IMR-90 (cell line): ENCODE measurements at regions of chr14 and their contacts with region 1.

Region 1: GRCh38 chr14:77320238-77320935 is at the start of gene POMT2:
- DNase-seq: peak; percentile 79
- ATAC-seq: peak; percentile 64
- H3K4me3 ChIP-seq: peak within 1 kb of the TSS; percentile 84
- H3K27ac ChIP-seq: peak within 1 kb of the TSS; percentile 98
- H3K4me1 ChIP-seq: peaks cover 2% of the 10 kb centered on the region; the same call in 1 of the 2 replicates
- H3K27me3 ChIP-seq: no peaks in the 10 kb centered on the region
- CTCF ChIP-seq: peak; percentile 57
- POLR2A ChIP-seq: no peak
- RAD21 ChIP-seq: 0 out of 2 replicates have a peak, but pooled peaks have one; percentile 9
- total RNA-seq, gene POMT2: 5.8 and 6.5 TPM in 2 replicates

Region 2: DNA sequence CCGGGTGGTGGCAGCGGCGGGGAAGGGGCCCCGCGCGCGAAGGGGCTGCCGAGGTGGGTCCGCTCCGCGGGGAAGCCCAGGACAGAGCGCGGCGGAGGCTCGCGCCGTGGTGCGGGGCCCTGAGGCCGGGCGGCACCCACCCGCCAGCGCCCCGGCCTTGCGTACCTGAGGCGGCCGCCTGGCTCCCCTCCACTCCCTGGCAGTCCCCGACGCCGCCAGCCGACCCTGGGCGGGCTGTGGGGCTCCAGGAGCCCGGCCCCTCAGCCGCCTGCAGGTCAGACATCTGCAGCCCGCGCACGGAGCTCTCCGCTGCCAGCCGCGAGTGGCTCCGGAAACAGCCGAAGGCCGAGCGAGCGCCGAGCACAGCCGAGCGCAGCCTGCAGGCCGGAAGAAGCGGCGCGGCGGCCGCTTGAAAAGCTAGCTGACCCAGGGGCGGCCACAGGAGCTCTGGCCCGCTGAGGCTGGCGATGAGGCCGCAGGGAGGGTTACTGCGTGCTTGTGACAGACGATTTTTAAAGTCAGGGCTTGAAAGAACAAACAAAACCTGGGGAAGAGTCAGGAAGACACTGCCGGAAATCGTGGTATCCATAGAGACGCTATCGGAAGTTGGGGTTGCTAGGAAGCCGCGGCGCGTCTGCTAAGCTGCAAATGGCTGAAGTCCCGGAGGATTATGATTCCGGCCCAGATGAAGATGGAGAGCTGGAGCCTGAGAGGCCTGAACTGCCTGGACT is 56.5 kb after region 1 on chr14 and contains the starts of genes SAMD15 and TMED8:
- CTCF ChIA-PET with region 1: interaction called, 3 read pairs
- POLR2A ChIA-PET with region 1: no interaction called
- dilution Hi-C with region 1: no loop called
- in situ Hi-C with region 1: no loop called
- intact Hi-C with region 1: loop called (anchors 2 kb)
- DNase-seq: peak; percentile 80
- ATAC-seq: peak; percentile 98
- H3K4me3 ChIP-seq: peak within 1 kb of the TSS; percentile 86
- H3K27ac ChIP-seq: peak within 1 kb of the TSS; percentile 93
- H3K4me1 ChIP-seq: no peaks in the 10 kb centered on the region
- H3K27me3 ChIP-seq: peaks cover 7% of the 10 kb centered on the region
- CTCF ChIP-seq: peak; percentile 24; the same call in 1 of the 2 replicates
- POLR2A ChIP-seq: no peak
- RAD21 ChIP-seq: no peak
- total RNA-seq, gene SAMD15: 1.3 and 1.7 TPM in 2 replicates
- total RNA-seq, gene TMED8: 5.0 and 6.9 TPM in 2 replicates

Region 3: GRCh38 chr14:77526266-77526665 is 205.9 kb after region 1 on chr14:
- CTCF ChIA-PET with region 1: no interaction called
- POLR2A ChIA-PET with region 1: no interaction called
- dilution Hi-C with region 1: no loop called
- in situ Hi-C with region 1: no loop called
- intact Hi-C with region 1: no loop called
- DNase-seq: no peak
- ATAC-seq: no peak
- H3K4me3 ChIP-seq: no peak overlapping the region
- H3K27ac ChIP-seq: no peak overlapping the region; the same call in 1 of the 2 replicates
- H3K4me1 ChIP-seq: peaks cover 4% of the 10 kb centered on the region; the same call in 1 of the 2 replicates
- H3K27me3 ChIP-seq: no peaks in the 10 kb centered on the region
- CTCF ChIP-seq: no peak
- POLR2A ChIP-seq: no peak
- RAD21 ChIP-seq: no peak

Region 4: DNA sequence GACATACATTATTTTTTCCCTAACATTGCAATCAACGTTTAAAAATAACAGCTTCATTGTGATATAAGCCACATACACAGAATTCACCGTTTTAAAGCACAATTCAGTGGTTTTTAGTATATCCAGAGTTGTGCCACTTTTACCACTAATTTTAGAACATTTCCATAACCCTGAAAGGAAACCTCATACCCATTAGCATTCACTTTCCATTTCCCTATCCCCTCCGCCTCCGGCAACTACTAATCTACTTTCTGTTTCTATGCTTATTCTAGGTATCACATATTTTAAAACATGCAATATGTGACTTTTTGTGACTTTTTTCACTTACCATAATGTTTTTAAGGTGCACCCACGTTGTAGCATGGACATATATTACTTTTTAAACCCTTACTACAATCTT is 233.8 kb after region 1 on chr14:
- CTCF ChIA-PET with region 1: no interaction called
- POLR2A ChIA-PET with region 1: no interaction called
- dilution Hi-C with region 1: no loop called
- in situ Hi-C with region 1: no loop called
- intact Hi-C with region 1: loop called (anchors 5 kb)
- DNase-seq: no peak
- ATAC-seq: no peak
- H3K4me3 ChIP-seq: no peak overlapping the region
- H3K27ac ChIP-seq: no peak overlapping the region
- H3K4me1 ChIP-seq: no peaks in the 10 kb centered on the region
- H3K27me3 ChIP-seq: no peaks in the 10 kb centered on the region
- CTCF ChIP-seq: no peak
- POLR2A ChIP-seq: no peak
- RAD21 ChIP-seq: no peak